ENCODE measurements at regions of chr12 and their contacts with region 1.

Region 1: GRCh38 chr12:110913119-110914056 is 7.0 kb downstream of the MYL2 start:
- DNase-seq: no peak
- ATAC-seq: no peak
- H3K4me3 ChIP-seq: no peak overlapping the region
- H3K27ac ChIP-seq: no peak overlapping the region
- H3K4me1 ChIP-seq: peaks cover 16% of the 10 kb centered on the region
- H3K27me3 ChIP-seq: no peaks in the 10 kb centered on the region
- CTCF ChIP-seq: no peak

Region 2: DNA sequence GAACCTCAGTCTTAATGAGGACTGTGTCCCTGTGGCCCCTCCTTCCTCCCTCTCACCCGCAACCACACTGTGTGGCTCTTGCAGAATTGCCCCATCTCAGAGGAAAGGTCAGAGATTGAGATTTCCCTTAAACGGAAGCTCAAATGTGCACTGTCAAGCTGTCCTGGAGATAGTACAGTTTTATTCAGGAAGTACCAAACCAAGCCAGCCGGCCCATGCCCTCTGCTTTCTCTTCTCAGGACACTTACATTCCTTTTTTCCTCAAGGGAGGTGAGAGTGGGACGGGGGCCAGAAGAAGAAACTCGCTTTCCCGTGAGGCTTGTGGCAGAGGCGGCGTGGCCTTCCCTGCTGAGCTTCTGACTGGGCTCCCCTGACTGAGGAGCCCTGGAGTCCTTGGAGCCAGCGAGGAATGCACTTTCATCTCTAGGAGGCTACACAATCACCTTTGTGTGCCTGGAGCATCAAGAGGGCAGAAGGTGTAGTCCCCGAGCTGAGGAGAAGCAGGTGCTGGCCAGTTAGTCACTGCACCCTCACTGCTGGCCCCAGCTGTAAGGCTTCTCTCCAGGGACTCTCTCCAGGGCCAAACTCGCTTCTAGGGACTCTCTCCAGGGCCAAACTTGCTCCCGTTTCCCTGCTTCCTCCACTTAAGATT is 656.5 kb before region 1 on chr12:
- CTCF ChIA-PET with region 1: no interaction called
- POLR2A ChIA-PET with region 1: interaction called, 13 read pairs
- intact Hi-C with region 1: no loop called
- DNase-seq: no peak
- ATAC-seq: no peak; the same call in 1 of the 2 replicates
- H3K4me3 ChIP-seq: no peak overlapping the region
- H3K27ac ChIP-seq: no peak overlapping the region
- H3K4me1 ChIP-seq: no peaks in the 10 kb centered on the region
- H3K27me3 ChIP-seq: no peaks in the 10 kb centered on the region
- CTCF ChIP-seq: no peak

Region 3: GRCh38 chr12:111451649-111452129 is 538.3 kb after region 1 on chr12:
- CTCF ChIA-PET with region 1: interaction called, 11 read pairs
- POLR2A ChIA-PET with region 1: no interaction called
- intact Hi-C with region 1: no loop called
- DNase-seq: peak; percentile 72
- ATAC-seq: peak; percentile 47
- H3K4me3 ChIP-seq: no peak overlapping the region
- H3K27ac ChIP-seq: no peak overlapping the region
- H3K4me1 ChIP-seq: no peaks in the 10 kb centered on the region
- H3K27me3 ChIP-seq: no peaks in the 10 kb centered on the region
- CTCF ChIP-seq: peak; percentile 97

Measured in PC-3 (cell line).